ENCODE measurements at regions of chr5 and their contacts with region 1.

Region 1: DNA sequence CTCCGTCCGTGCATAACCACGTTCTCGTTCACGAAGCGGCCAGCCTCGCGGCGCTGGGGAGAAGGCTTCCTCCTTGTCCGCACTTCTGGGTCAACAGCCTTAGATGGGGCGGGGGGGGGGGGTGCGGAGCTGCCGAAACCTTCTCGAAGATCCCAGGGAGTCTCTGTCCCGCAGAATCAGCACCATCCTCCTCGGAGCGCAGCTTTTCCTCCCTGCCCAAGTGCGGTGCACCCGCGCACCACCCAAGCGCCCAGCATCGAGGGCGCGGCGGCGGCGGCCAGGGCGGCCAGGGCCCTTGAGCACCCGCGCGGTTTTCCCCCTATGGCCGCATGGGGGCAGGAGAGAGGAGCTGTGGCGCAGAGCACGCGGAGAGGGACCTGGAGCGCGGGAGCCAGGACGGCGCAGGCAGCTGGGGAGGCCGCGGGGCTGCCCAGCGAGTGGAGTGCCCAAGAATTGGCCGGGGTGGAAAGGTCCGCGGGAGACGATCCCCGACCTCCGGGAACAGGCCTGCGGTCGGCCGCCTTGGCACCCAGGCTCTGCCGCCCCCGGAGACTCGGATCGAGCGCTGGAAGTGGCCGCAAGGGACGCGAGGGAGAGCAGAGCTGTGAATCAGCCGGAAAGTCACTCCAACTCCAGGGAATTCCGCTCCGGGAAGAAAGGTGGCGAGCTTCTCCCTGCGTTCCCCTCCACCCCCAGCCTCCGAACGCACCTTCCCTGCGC is 43.1 kb downstream of the TMEM174 start:
- DNase-seq: peak; percentile 88 to 94 (median 91)
- H3K4me3 ChIP-seq: peak overlapping the region; percentile 32 to 58 (median 34)
- H3K27ac ChIP-seq: no peak overlapping the region
- H3K4me1 ChIP-seq: peaks cover 0 to 3% (median 0%) of the 10 kb centered on the region in 3 donors
- H3K27me3 ChIP-seq: no peaks in the 10 kb centered on the region
- CTCF ChIP-seq: peak; percentile 83

Region 2: GRCh38 chr5:73027361-73027760 is 188.7 kb before region 1 on chr5:
- intact Hi-C with region 1: no loop called
- DNase-seq: no peak
- H3K4me3 ChIP-seq: no peak overlapping the region
- H3K27ac ChIP-seq: no peak overlapping the region
- H3K4me1 ChIP-seq: peaks cover 0 to 4% (median 0%) of the 10 kb centered on the region in 3 donors
- H3K27me3 ChIP-seq: no peaks in the 10 kb centered on the region
- CTCF ChIP-seq: no peak

Region 3: GRCh38 chr5:73370640-73371583 is 154.9 kb after region 1 on chr5:
- intact Hi-C with region 1: no loop called
- DNase-seq: peak in 2 of 5 donors; percentile 56 to 58
- H3K4me3 ChIP-seq: no peak overlapping the region
- H3K27ac ChIP-seq: no peak overlapping the region
- H3K4me1 ChIP-seq: no peaks in the 10 kb centered on the region
- H3K27me3 ChIP-seq: no peaks in the 10 kb centered on the region
- CTCF ChIP-seq: no peak

Region 4: DNA sequence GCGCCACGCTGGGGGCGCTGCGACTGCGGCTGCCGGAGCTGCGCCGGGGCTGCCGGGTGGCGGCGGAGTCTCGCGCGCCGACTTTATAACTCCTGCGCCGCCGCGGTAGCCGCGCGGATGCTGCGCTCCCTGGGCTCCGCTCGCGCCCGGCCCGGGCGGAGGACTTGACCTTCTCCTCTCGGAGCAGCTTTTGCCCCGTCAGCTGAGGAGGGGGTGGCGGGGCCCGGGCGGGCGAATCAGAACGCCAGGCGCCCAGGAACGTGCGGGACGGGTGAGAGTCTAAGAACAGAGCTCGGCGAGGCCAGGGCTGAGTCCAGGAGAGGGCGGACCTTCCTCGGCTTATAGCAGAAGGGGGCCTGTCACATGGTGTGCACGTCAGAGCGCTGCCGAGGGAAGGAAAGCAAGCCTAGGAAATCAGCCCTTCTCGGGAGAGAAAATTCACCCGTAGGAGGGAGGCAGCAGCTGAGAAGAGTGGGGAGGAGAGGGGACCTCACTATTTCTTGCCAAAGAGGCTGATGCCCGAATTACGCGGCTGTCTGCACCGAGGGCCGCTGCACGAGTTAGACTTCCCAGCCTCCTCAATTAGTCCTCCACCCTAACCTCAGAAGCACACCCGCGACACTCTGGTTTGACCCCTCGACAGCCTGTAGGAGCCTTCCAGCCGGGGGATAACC is 232.5 kb after region 1 on chr5 and contains the start of gene FOXD1:
- intact Hi-C with region 1: loop called (anchors 10 kb)
- DNase-seq: peak; percentile 94 to 97 (median 95)
- H3K4me3 ChIP-seq: peak within 1 kb of the TSS; percentile 49 to 64 (median 58)
- H3K27ac ChIP-seq: peak within 1 kb of the TSS; percentile 61 to 70
- H3K4me1 ChIP-seq: peaks cover 0 to 4% (median 2%) of the 10 kb centered on the region in 3 donors
- H3K27me3 ChIP-seq: peaks cover 44% of the 10 kb centered on the region
- CTCF ChIP-seq: no peak
- total RNA-seq, gene FOXD1: 5.9 TPM